ENCODE measurements at regions of chr5 and their contacts with region 1.

Region 1: DNA sequence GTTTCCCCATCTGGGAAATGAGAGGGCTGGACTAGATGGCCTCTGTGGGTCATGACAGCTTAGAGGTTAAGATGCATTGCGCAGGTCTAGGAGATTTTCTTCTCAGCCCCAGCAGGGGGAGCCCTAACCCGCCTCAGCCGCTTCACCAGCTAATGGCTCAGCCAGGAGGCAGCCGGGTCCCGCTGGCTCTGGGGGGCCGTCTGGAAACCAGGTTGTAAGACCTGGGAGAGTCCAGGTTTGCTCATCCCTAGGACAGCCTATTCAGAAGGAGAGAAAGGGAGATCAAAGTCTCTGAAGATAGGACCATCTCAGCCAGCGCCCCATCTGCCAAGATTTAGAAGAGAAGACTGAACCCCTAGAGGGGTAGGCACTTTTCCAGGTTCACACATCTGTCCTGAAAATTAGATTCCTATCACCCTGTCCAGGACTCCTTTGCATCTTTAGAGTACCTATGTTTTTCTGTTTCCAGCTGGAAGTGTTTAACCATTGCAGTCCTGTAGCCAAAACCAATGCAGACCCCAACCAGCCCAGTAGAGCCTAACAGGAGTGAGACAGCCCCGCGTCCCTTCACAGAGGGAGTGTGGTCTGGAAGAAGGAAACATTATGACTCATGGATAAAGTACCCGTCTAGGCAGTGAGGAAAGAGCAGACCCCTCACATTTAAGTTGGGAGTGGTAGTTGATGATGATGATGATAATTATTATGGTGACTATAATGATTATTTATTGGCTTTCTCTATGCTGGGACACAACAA is 27.5 kb downstream of the SPARC start:
- DNase-seq: peak; percentile 72 to 94 (median 85)
- ATAC-seq: peak; percentile 92
- H3K4me3 ChIP-seq: no peak overlapping the region
- H3K27ac ChIP-seq: peak overlapping the region in 1 of 2 donors; percentile 61
- H3K4me1 ChIP-seq: peaks cover 9 to 25% of the 10 kb centered on the region in 2 donors
- H3K27me3 ChIP-seq: no peaks in the 10 kb centered on the region
- CTCF ChIP-seq: peak; percentile 81

Region 2: GRCh38 chr5:151447174-151448037 is 211.8 kb before region 1 on chr5 and contains the start of gene SLC36A1:
- intact Hi-C with region 1: loop called in 1 of 2 experiments (anchors 10 kb)
- DNase-seq: peak; percentile 90 to 98 (median 94)
- ATAC-seq: peak; percentile 100
- H3K4me3 ChIP-seq: peak within 1 kb of the TSS; percentile 83 to 85
- H3K27ac ChIP-seq: peak within 1 kb of the TSS; percentile 30 to 83
- H3K4me1 ChIP-seq: peaks cover 8 to 33% of the 10 kb centered on the region in 2 donors
- H3K27me3 ChIP-seq: no peaks in the 10 kb centered on the region
- CTCF ChIP-seq: peak; percentile 82 to 97
- polyA plus RNA-seq, gene SLC36A1: 4.0 to 6.2 (median 5.0) TPM

Region 3: DNA sequence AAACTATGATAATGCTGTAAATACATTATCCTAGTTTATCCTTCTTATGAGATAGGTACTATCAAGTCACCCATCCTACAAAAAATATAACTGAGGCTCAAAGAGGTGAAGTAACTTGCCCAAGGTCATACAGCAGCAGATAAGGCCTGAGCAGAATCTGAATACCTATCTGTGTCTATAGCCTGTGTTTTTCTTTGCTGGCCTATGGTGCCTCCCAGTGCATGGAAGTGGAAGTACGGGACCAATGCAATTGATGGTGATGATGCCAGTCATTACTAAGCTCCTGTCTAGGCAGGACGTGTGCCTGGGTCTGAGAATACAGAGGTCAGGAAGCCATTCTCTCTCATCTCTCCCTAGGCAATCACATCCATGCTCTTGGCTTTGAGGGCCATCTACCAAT is 135.8 kb before region 1 on chr5:
- intact Hi-C with region 1: loop called in 1 of 2 experiments (anchors 10 kb)
- DNase-seq: no peak
- ATAC-seq: peak; percentile 82
- H3K4me3 ChIP-seq: no peak overlapping the region
- H3K27ac ChIP-seq: no peak overlapping the region
- H3K4me1 ChIP-seq: peaks cover 0 to 5% of the 10 kb centered on the region in 2 donors
- H3K27me3 ChIP-seq: no peaks in the 10 kb centered on the region
- CTCF ChIP-seq: peak; percentile 33 to 55

Region 4: DNA sequence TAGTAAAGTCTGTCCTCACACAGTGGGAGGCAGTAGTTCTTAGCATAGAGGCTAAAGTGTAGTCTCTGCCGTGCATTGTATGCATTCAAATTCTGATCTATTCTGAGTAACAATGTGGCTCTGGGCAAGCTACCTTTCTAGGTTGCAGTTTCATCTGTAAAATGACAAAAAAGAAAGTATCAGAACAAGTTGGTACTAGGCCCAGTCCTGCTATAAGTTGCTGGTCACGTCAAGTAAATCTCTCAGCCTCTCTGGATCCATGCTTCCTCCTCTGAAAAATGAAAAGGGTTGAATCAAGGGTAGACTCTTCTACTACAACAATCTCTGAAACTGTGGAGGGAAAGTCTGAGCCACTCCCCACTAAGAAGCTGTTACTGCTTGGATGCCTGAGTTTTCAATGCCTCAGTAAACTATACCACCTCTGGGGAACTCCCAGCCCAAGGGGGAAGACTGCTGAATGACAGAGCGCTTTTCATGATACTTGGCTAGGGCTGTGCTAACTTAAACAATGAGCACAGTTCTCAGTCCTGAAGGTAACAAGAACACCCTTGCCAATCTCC is 62.0 kb after region 1 on chr5:
- intact Hi-C with region 1: loop called in 1 of 2 experiments (anchors 5 kb)
- DNase-seq: no peak
- ATAC-seq: no peak
- H3K4me3 ChIP-seq: no peak overlapping the region
- H3K27ac ChIP-seq: peak overlapping the region in 1 of 2 donors; percentile 4
- H3K4me1 ChIP-seq: peaks cover 20 to 36% of the 10 kb centered on the region in 2 donors
- H3K27me3 ChIP-seq: no peaks in the 10 kb centered on the region
- CTCF ChIP-seq: no peak

Region 5: GRCh38 chr5:151742870-151743294 is 83.7 kb after region 1 on chr5:
- intact Hi-C with region 1: loop called in 1 of 2 experiments (anchors 2 kb)
- DNase-seq: peak in 1 of 4 donors; percentile 39
- ATAC-seq: peak; percentile 45
- H3K4me3 ChIP-seq: no peak overlapping the region
- H3K27ac ChIP-seq: no peak overlapping the region
- H3K4me1 ChIP-seq: peaks cover 18 to 53% of the 10 kb centered on the region in 2 donors
- H3K27me3 ChIP-seq: no peaks in the 10 kb centered on the region
- CTCF ChIP-seq: peak; percentile 19 to 33

Measured in left lung (tissue), 14 donors.